PC-3 (cell line): ENCODE measurements at regions of chr5 and their contacts with region 1.

Region 1: DNA sequence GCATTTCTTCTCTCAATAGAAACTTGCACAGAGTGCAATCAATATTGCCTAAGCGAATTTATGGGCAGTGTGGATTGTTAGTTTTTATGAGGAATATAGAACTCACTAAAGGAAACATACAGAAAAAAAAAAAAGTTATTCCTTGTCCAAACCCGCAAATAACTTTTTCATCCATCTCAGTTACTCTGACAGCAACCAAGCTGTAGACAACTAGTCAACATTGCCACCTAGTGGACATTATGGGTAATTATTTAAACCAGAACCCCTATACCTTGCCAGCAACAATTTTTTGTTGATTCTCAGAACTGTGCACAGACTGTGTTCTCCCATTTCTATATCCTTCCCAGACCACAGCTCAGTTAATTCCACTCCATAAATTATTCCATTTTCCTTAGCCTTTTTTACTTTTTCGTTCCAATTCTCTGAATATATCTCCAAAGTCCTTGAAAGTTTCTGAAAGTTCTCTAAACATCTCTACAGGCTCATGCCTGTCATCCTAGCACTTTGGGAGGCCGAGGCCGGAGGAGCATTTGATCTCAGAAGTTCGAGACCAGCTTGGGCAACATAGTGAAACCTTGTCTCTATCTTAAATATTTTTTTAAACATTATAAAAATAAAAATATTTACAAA is 2.6 kb upstream of the AFAP1L1 start:
- DNase-seq: peak; percentile 96
- ATAC-seq: 0 out of 2 replicates have a peak, but pooled peaks have one; percentile 3
- H3K4me3 ChIP-seq: no peak overlapping the region
- H3K27ac ChIP-seq: no peak overlapping the region
- H3K4me1 ChIP-seq: peaks cover 28% of the 10 kb centered on the region
- H3K27me3 ChIP-seq: no peaks in the 10 kb centered on the region
- CTCF ChIP-seq: peak; percentile 99

Region 2: DNA sequence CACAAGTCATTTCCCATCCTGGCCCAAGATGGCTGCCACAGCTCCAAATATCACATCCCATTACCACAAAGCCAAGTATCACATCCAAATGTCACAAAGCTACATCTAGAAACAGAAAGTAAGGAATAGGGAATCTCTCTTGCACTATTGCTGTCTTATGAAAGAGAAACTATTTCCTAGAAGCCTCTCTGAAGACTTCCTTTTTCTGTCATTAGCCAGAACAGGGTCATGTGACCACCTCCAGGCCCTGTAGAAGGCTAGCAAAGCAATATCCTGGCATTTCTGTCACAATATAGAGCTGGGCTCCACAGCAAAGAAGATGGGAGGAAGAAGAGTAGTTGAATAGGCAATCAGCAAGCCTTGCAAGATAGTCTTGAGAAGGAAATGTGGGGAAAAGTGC is 305.4 kb before region 1 on chr5:
- CTCF ChIA-PET with region 1: interaction called, 11 read pairs
- POLR2A ChIA-PET with region 1: no interaction called
- intact Hi-C with region 1: no loop called
- DNase-seq: no peak
- ATAC-seq: no peak
- H3K4me3 ChIP-seq: no peak overlapping the region
- H3K27ac ChIP-seq: peak overlapping the region; percentile 79; the same call in 1 of the 2 replicates
- H3K4me1 ChIP-seq: peaks cover 81% of the 10 kb centered on the region
- H3K27me3 ChIP-seq: no peaks in the 10 kb centered on the region
- CTCF ChIP-seq: no peak

Region 3: GRCh38 chr5:149053072-149053695 is 215.9 kb before region 1 on chr5:
- CTCF ChIA-PET with region 1: interaction called, 3 read pairs
- POLR2A ChIA-PET with region 1: interaction called, 4 read pairs
- intact Hi-C with region 1: loop called (anchors 5 kb)
- DNase-seq: peak; percentile 99
- ATAC-seq: peak; percentile 93
- H3K4me3 ChIP-seq: peak overlapping the region; percentile 3; the same call in 1 of the 2 replicates
- H3K27ac ChIP-seq: peak overlapping the region; percentile 65
- H3K4me1 ChIP-seq: peaks cover 54% of the 10 kb centered on the region
- H3K27me3 ChIP-seq: no peaks in the 10 kb centered on the region
- CTCF ChIP-seq: peak; percentile 25; the same call in 1 of the 2 replicates

Region 4: GRCh38 chr5:149298842-149299404 is 29.9 kb after region 1 on chr5:
- CTCF ChIA-PET with region 1: no interaction called
- POLR2A ChIA-PET with region 1: no interaction called
- intact Hi-C with region 1: no loop called
- DNase-seq: no peak
- ATAC-seq: no peak
- H3K4me3 ChIP-seq: no peak overlapping the region
- H3K27ac ChIP-seq: no peak overlapping the region
- H3K4me1 ChIP-seq: no peaks in the 10 kb centered on the region
- H3K27me3 ChIP-seq: no peaks in the 10 kb centered on the region
- CTCF ChIP-seq: no peak

Region 5: GRCh38 chr5:149367249-149367971 is 98.4 kb after region 1 on chr5:
- CTCF ChIA-PET with region 1: no interaction called
- POLR2A ChIA-PET with region 1: no interaction called
- intact Hi-C with region 1: loop called (anchors 5 kb)
- DNase-seq: peak; percentile 95
- ATAC-seq: peak; percentile 76
- H3K4me3 ChIP-seq: no peak overlapping the region
- H3K27ac ChIP-seq: no peak overlapping the region
- H3K4me1 ChIP-seq: no peaks in the 10 kb centered on the region
- H3K27me3 ChIP-seq: no peaks in the 10 kb centered on the region
- CTCF ChIP-seq: peak; percentile 99

Region 6: DNA sequence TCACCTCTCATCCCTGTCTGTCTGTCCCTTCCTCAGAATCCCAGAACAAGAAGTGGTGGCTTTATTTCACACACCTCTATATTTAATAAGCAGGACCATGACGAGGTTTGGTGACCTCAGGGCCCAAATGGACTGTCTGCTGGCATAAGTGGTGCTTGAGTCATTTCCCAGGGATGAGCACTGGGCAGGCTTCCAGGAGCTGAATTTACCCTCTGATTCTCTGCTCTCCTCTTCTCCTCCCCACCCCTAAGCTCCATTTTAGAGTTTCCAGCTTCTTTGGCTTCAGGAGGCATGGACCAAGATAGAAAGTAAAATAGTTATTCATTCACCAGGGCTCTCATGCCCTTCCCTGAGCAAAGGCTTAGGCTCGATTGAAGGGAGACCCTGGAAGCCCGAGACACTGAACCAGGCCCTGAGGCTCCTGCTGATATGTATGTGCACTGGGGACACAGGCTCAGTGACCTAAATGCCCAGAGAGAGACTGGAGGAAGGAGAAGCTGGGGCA is 530.1 kb after region 1 on chr5:
- CTCF ChIA-PET with region 1: no interaction called
- POLR2A ChIA-PET with region 1: no interaction called
- intact Hi-C with region 1: no loop called
- DNase-seq: peak; percentile 94
- ATAC-seq: peak; percentile 87
- H3K4me3 ChIP-seq: no peak overlapping the region
- H3K27ac ChIP-seq: peak overlapping the region; percentile 35
- H3K4me1 ChIP-seq: peaks cover 15% of the 10 kb centered on the region
- H3K27me3 ChIP-seq: no peaks in the 10 kb centered on the region
- CTCF ChIP-seq: no peak